SK-N-SH (cell line): ENCODE measurements at regions of chr9 and their contacts with region 1.

Region 1: GRCh38 chr9:136671646-136672430 is 9.1 kb downstream of the EGFL7 start:
- DNase-seq: peak; percentile 93
- H3K4me3 ChIP-seq: no peak overlapping the region
- H3K27ac ChIP-seq: no peak overlapping the region; a peak in 1 of 4 replicates
- H3K4me1 ChIP-seq: peaks cover 0 to 14% of the 10 kb centered on the region in 2 experiments; a peak in 1 of 4 replicates
- H3K27me3 ChIP-seq: no peaks in the 10 kb centered on the region
- CTCF ChIP-seq: peak; percentile 84
- EP300 ChIP-seq: no peak
- RAD21 ChIP-seq: peak; percentile 54

Region 2: DNA sequence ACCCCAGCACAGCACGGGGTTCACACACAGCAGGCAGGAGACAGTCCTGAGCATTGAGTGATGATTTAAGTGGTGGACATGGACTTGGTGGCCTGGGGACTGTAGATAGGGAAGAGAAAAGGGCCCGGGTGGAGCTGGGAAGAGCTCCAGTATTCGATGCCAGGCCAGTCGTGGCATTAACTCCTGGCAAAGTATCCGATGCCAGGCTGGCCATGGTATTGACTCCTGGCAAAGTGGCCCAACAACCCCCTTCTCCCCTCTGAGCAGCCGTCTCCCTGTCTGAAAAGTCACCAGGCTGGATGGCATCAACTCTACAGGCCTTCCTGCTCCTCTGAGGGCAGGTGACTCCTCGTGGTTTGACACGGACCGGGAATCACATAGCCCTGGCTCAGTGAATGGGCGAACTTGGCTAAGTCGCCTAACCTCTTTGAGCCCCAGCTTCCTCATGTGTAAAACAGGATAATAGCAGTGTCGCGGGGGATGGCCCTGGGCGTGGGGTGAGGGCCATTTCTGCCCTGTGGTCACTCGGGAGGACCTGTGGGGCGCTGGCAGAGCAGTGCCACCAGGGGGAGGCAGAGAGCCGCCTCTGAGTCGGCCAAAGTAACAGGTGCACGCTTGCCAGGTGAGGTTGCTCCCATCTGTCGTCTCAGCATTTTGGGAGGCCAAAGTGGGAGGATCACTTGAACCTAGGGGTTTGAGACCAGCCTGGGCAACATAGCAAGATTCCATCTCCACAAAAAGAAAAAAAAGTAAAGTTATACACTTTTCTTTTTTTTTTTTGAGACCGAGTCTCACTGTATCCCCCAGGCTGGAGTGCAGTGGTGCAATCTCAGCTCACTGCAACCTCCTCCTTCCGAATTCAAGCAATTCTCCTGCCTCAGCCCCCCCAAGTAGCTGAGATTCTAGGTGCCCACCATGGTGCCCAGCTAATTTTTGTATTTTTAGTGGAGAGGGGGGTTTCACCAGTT is 183.3 kb before region 1 on chr9:
- CTCF ChIA-PET with region 1: interaction called, 23 read pairs
- POLR2A ChIA-PET with region 1: no interaction called
- DNase-seq: peak; percentile 81
- H3K4me3 ChIP-seq: peak overlapping the region in 1 of 2 experiments; percentile 55; a peak in 1 of 4 replicates
- H3K27ac ChIP-seq: no peak overlapping the region
- H3K4me1 ChIP-seq: peaks cover 0 to 16% of the 10 kb centered on the region in 2 experiments; a peak in 1 of 4 replicates
- H3K27me3 ChIP-seq: no peaks in the 10 kb centered on the region
- CTCF ChIP-seq: peak; percentile 99
- EP300 ChIP-seq: no peak
- RAD21 ChIP-seq: peak; percentile 94

Region 3: GRCh38 chr9:136644598-136645351 is 27.1 kb before region 1 on chr9:
- CTCF ChIA-PET with region 1: interaction called, 35 read pairs
- POLR2A ChIA-PET with region 1: no interaction called
- DNase-seq: peak; percentile 70
- H3K4me3 ChIP-seq: no peak overlapping the region; a peak in 1 of 4 replicates
- H3K27ac ChIP-seq: peak overlapping the region in 1 of 2 experiments; percentile 92; a peak in 1 of 4 replicates
- H3K4me1 ChIP-seq: peaks cover 0 to 33% of the 10 kb centered on the region in 2 experiments; a peak in 1 of 4 replicates
- H3K27me3 ChIP-seq: no peaks in the 10 kb centered on the region
- CTCF ChIP-seq: no peak
- EP300 ChIP-seq: no peak
- RAD21 ChIP-seq: no peak

Region 4: DNA sequence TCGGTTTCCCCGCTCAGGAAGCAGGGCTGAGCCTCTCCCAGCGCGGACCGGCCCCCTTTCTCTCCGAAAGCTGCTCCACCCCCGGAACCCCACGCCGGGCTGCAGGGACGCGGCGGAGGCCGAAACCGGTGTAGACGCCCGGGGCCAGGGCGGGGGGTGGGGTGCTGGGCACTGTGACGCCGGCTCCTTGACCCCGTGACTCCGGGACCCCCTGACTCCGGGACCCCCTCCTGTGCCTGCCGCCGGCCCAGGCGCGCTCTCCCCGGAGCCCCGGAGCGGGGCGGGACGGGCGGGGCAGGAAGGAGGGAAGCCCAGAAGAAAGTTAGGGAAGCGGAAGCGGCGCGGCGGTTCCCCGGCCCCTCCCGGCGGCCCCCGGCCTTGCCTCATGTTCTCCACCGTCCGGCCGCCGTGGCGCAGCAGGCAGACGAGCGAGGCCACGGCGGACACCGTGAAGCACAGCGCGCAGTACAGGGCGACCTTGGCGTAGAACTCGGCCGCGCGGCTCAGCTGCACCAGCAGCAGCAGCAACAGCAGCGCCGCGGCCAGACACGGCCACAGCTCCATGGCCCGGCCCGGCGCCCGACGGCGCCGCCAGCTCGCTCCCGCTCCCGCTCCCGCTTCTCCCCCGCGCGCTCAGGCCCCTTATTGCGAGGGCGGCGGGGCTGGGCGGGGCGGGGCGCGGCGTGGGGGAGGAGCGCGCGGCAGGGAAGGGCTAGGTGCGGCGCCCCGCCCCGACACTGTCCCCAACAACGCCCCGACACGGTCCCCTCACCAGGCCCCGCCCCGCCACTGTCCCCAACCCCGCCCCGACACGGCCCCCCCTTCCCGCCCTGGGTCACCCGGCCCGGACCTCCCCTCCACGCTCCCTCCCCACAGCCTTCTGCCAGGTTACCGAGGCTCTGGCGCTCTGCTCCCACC is 15.2 kb after region 1 on chr9 and contains the start of gene AGPAT2:
- CTCF ChIA-PET with region 1: interaction called, 90 read pairs
- POLR2A ChIA-PET with region 1: interaction called, 5 read pairs
- DNase-seq: peak; percentile 98
- H3K4me3 ChIP-seq: peak within 1 kb of the TSS; percentile 72 to 78
- H3K27ac ChIP-seq: peak within 1 kb of the TSS in 1 of 2 experiments; percentile 55; a peak in 1 of 4 replicates
- H3K4me1 ChIP-seq: peaks cover 4 to 19% of the 10 kb centered on the region in 2 experiments; a peak in 2 of 4 replicates
- H3K27me3 ChIP-seq: no peaks in the 10 kb centered on the region
- CTCF ChIP-seq: no peak
- EP300 ChIP-seq: no peak
- RAD21 ChIP-seq: no peak
- polyA plus RNA-seq, gene AGPAT2: 41.8 and 46.8 TPM in 2 replicates

Region 5: GRCh38 chr9:136711751-136712689 is 40.2 kb after region 1 on chr9 and contains the start of gene DIPK1B:
- CTCF ChIA-PET with region 1: interaction called, 22 read pairs
- POLR2A ChIA-PET with region 1: no interaction called
- DNase-seq: peak; percentile 100
- H3K4me3 ChIP-seq: peak within 1 kb of the TSS; percentile 61 to 69
- H3K27ac ChIP-seq: peak within 1 kb of the TSS in 1 of 2 experiments; percentile 71; a peak in 2 of 4 replicates
- H3K4me1 ChIP-seq: peaks cover 4 to 18% of the 10 kb centered on the region in 2 experiments; a peak in 1 of 4 replicates
- H3K27me3 ChIP-seq: no peaks in the 10 kb centered on the region
- CTCF ChIP-seq: no peak
- EP300 ChIP-seq: no peak
- RAD21 ChIP-seq: no peak
- polyA plus RNA-seq, gene DIPK1B: 24.5 and 27.1 TPM in 2 replicates

Region 6: GRCh38 chr9:136728080-136728547 is 56.3 kb after region 1 on chr9:
- CTCF ChIA-PET with region 1: interaction called, 44 read pairs
- POLR2A ChIA-PET with region 1: interaction called, 4 read pairs
- DNase-seq: peak; percentile 98
- H3K4me3 ChIP-seq: peak overlapping the region; percentile 83 to 85
- H3K27ac ChIP-seq: peak overlapping the region in 1 of 2 experiments; percentile 63; a peak in 2 of 4 replicates
- H3K4me1 ChIP-seq: peaks cover 12 to 25% of the 10 kb centered on the region in 2 experiments; a peak in 2 of 4 replicates
- H3K27me3 ChIP-seq: no peaks in the 10 kb centered on the region
- CTCF ChIP-seq: peak; percentile 75
- EP300 ChIP-seq: peak in 1 of 2 experiments; percentile 49; a peak in 1 of 4 replicates
- RAD21 ChIP-seq: no peak